GM12878 (cell line): ENCODE measurements at regions of chr1 and their contacts with region 1.

Region 1: DNA sequence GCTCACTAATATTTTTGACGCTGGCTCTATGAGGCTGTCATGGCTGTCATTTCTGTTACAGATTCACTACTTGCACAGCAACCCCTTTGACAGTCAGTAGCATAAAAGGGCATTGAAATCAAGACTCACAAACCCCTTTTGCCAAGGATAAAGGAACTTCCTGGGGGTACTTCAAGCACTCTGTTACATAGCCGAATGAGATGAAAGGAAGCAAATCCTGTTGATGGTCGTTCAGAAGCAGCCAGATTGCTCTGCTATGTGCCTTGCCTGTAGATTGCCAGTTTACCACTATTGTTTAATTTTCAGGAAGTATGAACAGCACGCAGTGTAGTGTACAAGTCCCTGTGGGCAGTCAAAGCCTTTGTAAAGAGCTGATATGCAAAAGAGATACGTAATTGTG is 296.2 kb downstream of the LRRIQ3 start:
- DNase-seq: no peak
- ATAC-seq: peak; percentile 82
- H3K4me3 ChIP-seq: no peak overlapping the region
- H3K27ac ChIP-seq: no peak overlapping the region
- H3K4me1 ChIP-seq: no peaks in the 10 kb centered on the region
- H3K27me3 ChIP-seq: no peaks in the 10 kb centered on the region
- CTCF ChIP-seq: no peak
- EP300 ChIP-seq: no peak
- POLR2A ChIP-seq: no peak
- RAD21 ChIP-seq: no peak

Region 2: DNA sequence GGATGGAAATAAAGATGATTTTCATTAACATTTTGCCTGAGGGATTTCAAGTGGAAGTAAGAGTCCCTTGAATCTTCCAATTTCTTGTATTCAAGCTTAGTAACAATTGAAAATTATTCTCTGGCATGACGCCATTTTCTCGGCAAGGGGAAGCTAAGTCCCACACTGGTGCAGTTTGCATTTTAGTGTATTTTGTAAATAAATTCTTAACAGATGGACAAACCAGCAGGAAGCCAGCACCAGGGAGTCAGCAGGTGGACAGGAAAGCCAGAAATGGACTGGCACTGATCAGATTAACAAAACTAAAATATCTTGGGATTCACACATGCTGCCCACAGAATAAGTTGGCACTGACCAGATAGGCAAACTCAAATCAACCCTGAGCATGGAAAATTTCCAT is 15.0 kb before region 1 on chr1:
- CTCF ChIA-PET with region 1: interaction called, 3 read pairs
- POLR2A ChIA-PET with region 1: no interaction called
- RAD21 ChIA-PET with region 1: no interaction called
- SMC1A ChIA-PET with region 1: interaction called, 12 read pairs
- in situ Hi-C with region 1: no loop called
- intact Hi-C with region 1: no loop called
- DNase-seq: no peak
- ATAC-seq: no peak
- H3K4me3 ChIP-seq: no peak overlapping the region
- H3K27ac ChIP-seq: no peak overlapping the region
- H3K4me1 ChIP-seq: no peaks in the 10 kb centered on the region
- H3K27me3 ChIP-seq: no peaks in the 10 kb centered on the region
- CTCF ChIP-seq: no peak
- EP300 ChIP-seq: no peak
- POLR2A ChIP-seq: no peak
- RAD21 ChIP-seq: no peak

Region 3: GRCh38 chr1:74334147-74334546 is 432.4 kb after region 1 on chr1:
- CTCF ChIA-PET with region 1: no interaction called
- POLR2A ChIA-PET with region 1: no interaction called
- RAD21 ChIA-PET with region 1: no interaction called
- SMC1A ChIA-PET with region 1: no interaction called
- in situ Hi-C with region 1: no loop called
- intact Hi-C with region 1: no loop called
- DNase-seq: no peak
- ATAC-seq: no peak
- H3K4me3 ChIP-seq: no peak overlapping the region
- H3K27ac ChIP-seq: no peak overlapping the region
- H3K4me1 ChIP-seq: no peaks in the 10 kb centered on the region
- H3K27me3 ChIP-seq: no peaks in the 10 kb centered on the region
- CTCF ChIP-seq: no peak
- EP300 ChIP-seq: no peak
- POLR2A ChIP-seq: no peak
- RAD21 ChIP-seq: no peak